ENCODE measurements at regions of chr5 and their contacts with region 1.

Region 1: DNA sequence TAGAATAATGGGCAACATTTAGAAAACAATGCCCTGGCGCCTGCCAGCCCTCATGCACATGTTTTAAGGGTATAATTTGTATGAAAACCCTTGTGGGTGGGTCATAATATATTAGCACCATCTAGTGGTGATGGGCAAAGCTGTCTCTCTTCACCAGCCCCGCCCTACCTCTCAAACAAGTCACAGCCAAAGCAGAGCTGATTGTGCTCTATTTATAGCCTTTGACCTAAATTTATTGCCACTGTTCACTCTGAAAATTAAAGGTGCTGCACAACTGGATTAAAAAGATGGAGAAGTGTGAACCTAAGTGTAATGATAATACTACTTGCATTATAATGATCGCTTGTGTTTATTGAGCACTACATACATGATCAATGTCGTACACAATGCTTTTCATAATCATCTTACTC is 131.9 kb upstream of the ANKH start:
- DNase-seq: peak; percentile 77
- H3K4me3 Mint-ChIP-seq: no peak overlapping the region
- H3K27ac Mint-ChIP-seq: no peak overlapping the region
- H3K4me1 Mint-ChIP-seq: peaks cover 12% of the 10 kb centered on the region
- H3K27me3 Mint-ChIP-seq: peaks cover 19% of the 10 kb centered on the region
- CTCF ChIP-seq: peak; percentile 81

Region 2: DNA sequence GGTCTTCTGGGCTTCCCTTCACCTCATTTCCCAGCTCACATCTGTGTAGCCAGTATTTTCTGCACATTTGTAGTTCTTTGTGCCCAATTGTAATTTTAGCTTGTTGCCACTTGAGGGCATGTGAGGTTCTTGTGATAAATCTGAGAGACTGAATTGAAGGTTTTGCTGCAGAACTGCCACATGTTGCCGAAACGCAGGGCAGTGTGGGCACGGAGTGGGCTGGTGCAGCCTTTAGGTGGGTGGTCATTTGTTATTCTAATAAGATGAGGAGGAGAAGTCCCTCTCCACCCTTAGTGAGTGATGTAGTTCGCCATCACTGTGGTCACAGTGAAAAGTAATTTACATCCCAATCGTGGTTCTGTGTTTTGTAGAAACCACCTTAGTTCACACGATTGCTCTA is 317.8 kb before region 1 on chr5:
- CTCF ChIA-PET with region 1: interaction called, 44 read pairs
- POLR2A ChIA-PET with region 1: interaction called, 10 read pairs
- intact Hi-C with region 1: loop called (anchors 1 kb)
- DNase-seq: peak; percentile 51
- H3K4me3 Mint-ChIP-seq: no peak overlapping the region
- H3K27ac Mint-ChIP-seq: peak overlapping the region; percentile 14
- H3K4me1 Mint-ChIP-seq: peaks cover 19% of the 10 kb centered on the region
- H3K27me3 Mint-ChIP-seq: no peaks in the 10 kb centered on the region
- CTCF ChIP-seq: peak; percentile 60

Region 3: GRCh38 chr5:14871210-14872069 is 132.1 kb before region 1 on chr5 and contains the start of gene ANKH:
- CTCF ChIA-PET with region 1: interaction called, 25 read pairs
- POLR2A ChIA-PET with region 1: interaction called, 11 read pairs
- intact Hi-C with region 1: loop called (anchors 1 kb)
- DNase-seq: peak; percentile 72
- H3K4me3 Mint-ChIP-seq: peak within 1 kb of the TSS; percentile 80
- H3K27ac Mint-ChIP-seq: peak within 1 kb of the TSS; percentile 63
- H3K4me1 Mint-ChIP-seq: peaks cover 15% of the 10 kb centered on the region
- H3K27me3 Mint-ChIP-seq: no peaks in the 10 kb centered on the region
- CTCF ChIP-seq: no peak
- total RNA-seq, gene ANKH: 51.3 and 65.7 TPM in 2 replicates

Region 4: DNA sequence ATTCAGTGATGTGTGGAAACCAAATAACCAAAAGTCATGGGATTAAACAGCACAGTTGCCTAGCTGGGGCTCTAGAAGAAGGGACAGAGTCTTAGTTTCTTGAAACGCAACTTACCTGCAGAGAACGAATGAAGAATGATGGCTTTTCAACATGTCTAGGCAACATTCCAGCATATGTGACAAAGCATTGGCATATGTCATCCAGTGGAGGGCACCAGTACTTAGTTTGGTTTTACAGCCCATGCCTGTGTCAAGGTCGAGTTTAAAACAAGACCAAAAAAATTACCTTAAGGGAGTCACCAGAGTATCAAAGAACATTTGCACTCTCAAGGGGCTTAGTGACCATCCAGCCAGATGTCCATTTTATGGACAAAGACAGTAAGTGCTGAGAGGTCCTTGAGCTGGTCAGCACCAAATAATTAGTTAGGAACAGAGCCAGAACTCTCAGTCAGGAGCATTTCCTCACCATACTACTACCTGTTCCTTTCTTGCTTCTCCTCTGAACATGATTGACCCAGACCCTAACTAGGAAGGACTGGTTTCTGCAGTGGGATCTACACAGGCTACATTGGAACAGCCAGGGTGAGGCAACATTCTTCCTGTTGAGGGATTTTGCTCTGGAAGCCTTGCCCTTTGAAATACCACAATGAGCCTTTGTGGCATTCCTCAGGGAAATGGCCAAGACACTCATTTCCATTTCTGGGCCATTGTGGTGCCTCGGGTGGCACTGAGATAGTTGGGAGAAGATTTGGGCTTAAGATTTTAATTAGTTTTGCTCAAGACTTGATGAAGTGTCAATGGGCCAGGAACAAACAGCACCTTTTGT is 56.5 kb before region 1 on chr5:
- CTCF ChIA-PET with region 1: interaction called, 8 read pairs
- POLR2A ChIA-PET with region 1: no interaction called
- intact Hi-C with region 1: loop called (anchors 1 kb)
- DNase-seq: peak; percentile 66
- H3K4me3 Mint-ChIP-seq: no peak overlapping the region
- H3K27ac Mint-ChIP-seq: no peak overlapping the region
- H3K4me1 Mint-ChIP-seq: peaks cover 6% of the 10 kb centered on the region
- H3K27me3 Mint-ChIP-seq: no peaks in the 10 kb centered on the region
- CTCF ChIP-seq: peak; percentile 27

Region 5: GRCh38 chr5:14958196-14958595 is 45.3 kb before region 1 on chr5:
- CTCF ChIA-PET with region 1: interaction called, 17 read pairs
- POLR2A ChIA-PET with region 1: no interaction called
- intact Hi-C with region 1: no loop called
- DNase-seq: peak; percentile 76
- H3K4me3 Mint-ChIP-seq: no peak overlapping the region
- H3K27ac Mint-ChIP-seq: no peak overlapping the region
- H3K4me1 Mint-ChIP-seq: peaks cover 19% of the 10 kb centered on the region
- H3K27me3 Mint-ChIP-seq: no peaks in the 10 kb centered on the region
- CTCF ChIP-seq: no peak

Region 6: GRCh38 chr5:14983666-14984441 is 19.7 kb before region 1 on chr5:
- CTCF ChIA-PET with region 1: interaction called, 18 read pairs
- POLR2A ChIA-PET with region 1: no interaction called
- intact Hi-C with region 1: no loop called
- DNase-seq: no peak
- H3K4me3 Mint-ChIP-seq: no peak overlapping the region
- H3K27ac Mint-ChIP-seq: no peak overlapping the region
- H3K4me1 Mint-ChIP-seq: peaks cover 11% of the 10 kb centered on the region
- H3K27me3 Mint-ChIP-seq: no peaks in the 10 kb centered on the region
- CTCF ChIP-seq: no peak

Region 7: GRCh38 chr5:15013654-15014463 is 10.3 kb after region 1 on chr5:
- CTCF ChIA-PET with region 1: interaction called, 26 read pairs
- POLR2A ChIA-PET with region 1: no interaction called
- intact Hi-C with region 1: no loop called
- DNase-seq: peak; percentile 69
- H3K4me3 Mint-ChIP-seq: no peak overlapping the region
- H3K27ac Mint-ChIP-seq: no peak overlapping the region
- H3K4me1 Mint-ChIP-seq: peaks cover 14% of the 10 kb centered on the region
- H3K27me3 Mint-ChIP-seq: no peaks in the 10 kb centered on the region
- CTCF ChIP-seq: peak; percentile 56

Region 8: DNA sequence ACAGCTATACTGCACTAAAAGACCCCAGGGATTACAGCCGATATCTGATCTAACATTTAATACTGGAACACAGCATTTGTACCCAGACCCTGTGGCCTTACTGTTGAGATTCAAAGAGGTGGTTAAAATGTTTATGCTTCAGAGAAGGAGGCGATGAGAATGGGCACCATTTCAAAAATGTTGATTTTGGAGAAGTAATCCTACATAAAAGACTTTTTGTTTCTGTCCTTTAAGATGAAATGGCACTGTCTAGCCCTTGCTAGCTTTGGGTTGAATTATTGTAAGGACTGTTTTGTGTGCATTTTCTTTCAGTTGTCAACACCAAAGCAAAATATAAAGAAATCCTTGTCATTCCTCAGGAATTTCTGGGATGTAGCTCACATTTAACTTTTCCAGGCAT is 156.6 kb after region 1 on chr5:
- CTCF ChIA-PET with region 1: no interaction called
- POLR2A ChIA-PET with region 1: no interaction called
- intact Hi-C with region 1: no loop called
- DNase-seq: no peak
- H3K4me3 Mint-ChIP-seq: no peak overlapping the region
- H3K27ac Mint-ChIP-seq: no peak overlapping the region
- H3K4me1 Mint-ChIP-seq: no peaks in the 10 kb centered on the region
- H3K27me3 Mint-ChIP-seq: peaks cover 48% of the 10 kb centered on the region
- CTCF ChIP-seq: no peak

Measured in MCF 10A (cell line).